Ascending aorta (tissue), 2 donors: ENCODE measurements at regions of chr9 and their contacts with region 1.

Region 1: DNA sequence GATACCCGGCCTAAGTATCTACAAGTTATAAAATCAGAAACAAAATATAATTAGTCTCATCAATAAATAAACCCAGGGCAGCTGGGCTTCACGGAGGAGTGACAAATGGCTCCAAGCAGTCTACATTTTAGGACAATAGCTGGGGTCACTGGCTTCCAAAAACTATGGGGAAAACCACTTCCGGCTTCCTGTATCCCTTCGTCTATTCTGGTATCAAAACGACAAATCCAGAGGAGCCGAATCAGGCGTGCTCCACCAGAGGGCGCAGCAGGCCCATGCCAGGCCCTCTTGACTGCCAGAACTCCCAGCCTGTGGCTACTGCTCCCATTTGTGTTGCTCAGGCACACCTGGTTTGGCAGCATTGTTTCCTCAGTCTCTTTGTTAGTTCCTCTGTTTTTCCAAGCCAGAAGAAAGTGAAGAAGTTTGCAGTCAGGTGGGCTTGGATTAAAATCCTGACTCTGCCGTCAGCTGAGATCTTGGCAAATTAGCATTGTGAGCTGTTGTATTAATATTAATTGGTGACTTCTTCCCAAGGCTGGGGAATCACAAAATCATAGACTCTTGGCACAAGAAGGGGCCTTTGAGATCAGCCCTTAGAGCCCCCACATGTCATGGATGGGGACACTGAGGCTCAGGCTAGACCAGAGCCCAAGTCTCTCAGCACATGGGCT is 11.6 kb upstream of the RAB14 start:
- DNase-seq: peak; percentile 53 to 96
- H3K4me3 ChIP-seq: peak overlapping the region in 1 of 2 donors; percentile 23
- H3K27ac ChIP-seq: peak overlapping the region; percentile 32 to 54
- H3K4me1 ChIP-seq: no peaks in the 10 kb centered on the region
- H3K27me3 ChIP-seq: no peaks in the 10 kb centered on the region
- CTCF ChIP-seq: peak; percentile 91 to 96 (median 94)

Region 2: DNA sequence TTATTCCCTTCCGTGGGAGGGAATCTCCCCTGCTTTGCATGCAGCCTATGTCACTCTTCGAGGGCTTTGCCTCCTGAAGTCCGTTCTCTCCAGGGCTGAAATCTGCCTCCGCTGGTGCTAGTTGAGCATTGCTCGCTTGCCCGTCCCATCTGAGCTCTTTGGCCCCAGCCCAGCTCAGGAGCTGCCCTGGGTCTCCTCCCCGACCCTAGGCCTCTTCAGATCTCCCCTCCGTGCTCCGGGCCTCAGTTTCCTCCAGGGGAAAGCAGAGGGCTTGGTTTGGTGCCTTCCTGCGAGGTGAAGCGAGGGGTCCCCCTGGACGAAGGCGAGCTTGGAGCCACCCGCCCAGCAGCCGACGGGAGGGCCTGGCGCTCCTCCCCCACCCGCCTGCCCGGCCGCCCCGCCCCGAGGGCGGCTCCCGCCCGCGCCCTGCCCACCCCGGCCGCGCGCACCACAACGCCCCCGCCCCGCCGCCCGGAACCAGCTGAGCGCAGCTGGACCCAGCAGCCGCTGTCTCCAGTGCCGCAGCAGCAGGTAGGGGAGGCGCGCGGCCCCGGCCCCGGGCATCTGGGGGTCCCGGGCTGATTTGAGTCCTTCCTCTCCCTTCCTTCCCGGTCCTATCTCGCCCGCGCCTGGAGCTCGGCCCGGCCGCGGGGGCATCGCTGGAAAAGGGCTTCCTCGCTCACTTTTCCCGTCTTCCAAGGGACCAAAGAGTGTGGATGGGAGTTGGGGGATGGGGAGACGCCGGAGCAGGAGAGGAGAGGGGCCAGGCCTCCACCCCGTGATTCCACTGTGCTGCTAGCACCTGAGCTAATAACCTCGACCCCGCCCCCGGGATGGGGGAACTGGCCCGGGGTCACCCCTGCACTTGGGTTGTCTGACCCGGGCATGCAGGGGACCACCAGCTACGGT is 54.7 kb after region 1 on chr9 and contains the start of gene GSN:
- intact Hi-C with region 1: loop called (anchors 2 kb)
- DNase-seq: peak in 1 of 2 donors; percentile 91
- H3K4me3 ChIP-seq: peak within 1 kb of the TSS; percentile 90 to 99
- H3K27ac ChIP-seq: peak within 1 kb of the TSS; percentile 98 to 99
- H3K4me1 ChIP-seq: peaks cover 23 to 36% of the 10 kb centered on the region in 2 donors
- H3K27me3 ChIP-seq: no peaks in the 10 kb centered on the region
- CTCF ChIP-seq: peak in 1 of 3 experiments; percentile 33
- total RNA-seq, gene GSN: 3,012 TPM

Region 3: GRCh38 chr9:121299467-121300234 is 86.4 kb after region 1 on chr9:
- intact Hi-C with region 1: loop called (anchors 5 kb)
- DNase-seq: peak in 1 of 2 donors; percentile 88
- H3K4me3 ChIP-seq: peak overlapping the region; percentile 70 to 74
- H3K27ac ChIP-seq: peak overlapping the region; percentile 92 to 99
- H3K4me1 ChIP-seq: peaks cover 51 to 82% of the 10 kb centered on the region in 2 donors
- H3K27me3 ChIP-seq: no peaks in the 10 kb centered on the region
- CTCF ChIP-seq: no peak

Region 4: DNA sequence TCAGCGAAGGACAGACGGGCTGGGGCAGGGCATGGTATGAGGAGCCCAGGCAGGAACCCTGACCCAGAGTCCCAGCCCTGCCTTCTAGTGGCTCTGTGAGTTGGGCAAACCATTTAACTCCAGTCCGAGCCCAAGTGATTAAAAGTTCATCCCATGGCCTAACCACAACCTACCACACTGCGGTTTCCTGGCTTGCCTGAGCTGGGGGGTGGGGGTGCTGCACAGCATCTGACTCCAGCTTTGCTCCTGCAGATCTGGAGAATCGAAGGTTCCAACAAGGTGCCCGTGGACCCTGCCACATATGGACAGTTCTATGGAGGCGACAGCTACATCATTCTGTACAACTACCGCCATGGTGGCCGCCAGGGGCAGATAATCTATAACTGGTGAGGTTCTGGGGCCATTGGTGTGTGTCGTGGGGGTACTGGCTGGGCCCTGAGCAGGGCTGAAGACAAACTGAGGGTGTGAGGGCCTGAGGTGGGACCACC is 107.8 kb after region 1 on chr9:
- intact Hi-C with region 1: loop called (anchors 2 kb)
- DNase-seq: peak in 1 of 2 donors; percentile 61
- H3K4me3 ChIP-seq: no peak overlapping the region
- H3K27ac ChIP-seq: peak overlapping the region; percentile 98 to 99
- H3K4me1 ChIP-seq: peaks cover 20 to 71% of the 10 kb centered on the region in 2 donors
- H3K27me3 ChIP-seq: no peaks in the 10 kb centered on the region
- CTCF ChIP-seq: no peak

Region 5: DNA sequence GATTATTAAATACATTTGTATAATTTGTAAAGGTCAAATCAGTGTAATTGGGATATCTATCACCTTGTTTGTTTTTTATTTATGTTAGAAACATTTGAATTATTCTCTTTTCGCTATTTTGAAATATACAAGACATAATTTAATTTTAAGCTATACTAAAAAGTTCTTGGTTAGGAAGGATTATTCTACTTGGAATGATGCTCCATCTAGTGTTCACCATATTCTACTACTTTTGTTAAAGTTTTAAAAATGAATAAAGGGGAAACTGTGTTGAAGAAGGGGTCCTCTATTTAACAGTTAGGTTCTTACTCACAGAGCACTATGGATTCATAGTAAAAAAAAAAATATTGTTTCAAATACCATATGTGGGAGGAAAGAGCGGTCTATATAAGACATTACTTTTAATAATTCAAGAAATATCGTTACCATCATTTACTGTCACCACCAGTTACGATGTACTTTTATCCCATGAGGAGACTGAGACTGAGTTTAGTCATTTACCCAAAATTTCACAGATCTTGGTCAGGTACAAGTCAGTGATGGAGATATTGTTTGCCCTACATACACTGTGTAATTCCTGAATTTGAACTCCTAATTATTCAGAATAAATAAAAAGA is 163.1 kb after region 1 on chr9:
- intact Hi-C with region 1: loop called (anchors 1 kb)
- DNase-seq: no peak
- H3K4me3 ChIP-seq: no peak overlapping the region
- H3K27ac ChIP-seq: no peak overlapping the region
- H3K4me1 ChIP-seq: peaks cover 0 to 19% of the 10 kb centered on the region in 2 donors
- H3K27me3 ChIP-seq: no peaks in the 10 kb centered on the region
- CTCF ChIP-seq: peak; percentile 57 to 59 (median 58)

Region 6: DNA sequence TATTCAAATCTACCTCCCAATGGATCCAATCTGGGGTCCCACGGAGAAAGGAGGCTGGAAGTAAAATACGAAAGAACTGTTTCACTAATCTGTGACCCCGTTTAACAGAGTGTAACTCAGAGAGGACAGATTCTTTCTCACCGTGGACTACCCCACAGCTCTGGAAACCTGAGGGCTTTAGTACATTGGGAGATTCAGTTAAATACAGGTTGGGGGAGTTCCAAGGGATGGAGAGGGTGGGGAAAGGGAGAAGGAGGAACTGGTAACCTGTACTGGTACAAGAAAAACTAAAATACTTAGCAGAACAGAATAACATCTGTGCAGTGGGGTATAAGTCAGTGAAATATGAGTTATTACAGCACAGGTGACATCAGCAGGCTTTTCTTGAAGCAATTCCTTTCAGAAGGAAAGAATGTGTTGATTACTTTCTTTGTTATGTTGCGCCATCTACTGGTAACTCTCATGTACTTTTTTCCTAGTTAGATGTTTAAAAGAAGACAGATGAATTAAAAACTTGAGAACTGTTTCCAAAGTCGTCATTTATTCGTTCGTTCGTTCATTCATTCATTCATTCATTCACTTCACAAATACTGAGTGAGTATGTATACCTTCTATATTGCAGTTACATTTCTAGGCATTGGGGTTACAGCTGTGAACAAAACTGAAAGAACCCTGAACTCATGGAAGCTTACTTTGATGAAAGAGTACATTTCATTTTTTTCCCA is 186.8 kb after region 1 on chr9:
- intact Hi-C with region 1: loop called (anchors 1 kb)
- DNase-seq: no peak
- H3K4me3 ChIP-seq: no peak overlapping the region
- H3K27ac ChIP-seq: no peak overlapping the region
- H3K4me1 ChIP-seq: no peaks in the 10 kb centered on the region
- H3K27me3 ChIP-seq: no peaks in the 10 kb centered on the region
- CTCF ChIP-seq: peak; percentile 48 to 60 (median 59)